Mammary epithelial cell (primary cell): ENCODE measurements at regions of chr11 and their contacts with region 1.

Region 1: GRCh38 chr11:78416305-78417178 is 1.1 kb downstream of the GAB2 start:
- DNase-seq: peak; percentile 61
- H3K4me3 ChIP-seq: peak overlapping the region; percentile 55 to 64 (median 62)
- H3K27ac ChIP-seq: no peak overlapping the region
- H3K4me1 ChIP-seq: peaks cover 9% of the 10 kb centered on the region
- H3K27me3 ChIP-seq: no peaks in the 10 kb centered on the region
- CTCF ChIP-seq: peak in 1 of 2 donors; percentile 41

Region 2: GRCh38 chr11:78188286-78189173 is 228.0 kb before region 1 on chr11 and contains the starts of genes KCTD21 and USP35:
- CTCF ChIA-PET with region 1: no interaction called
- dilution Hi-C with region 1: no loop called
- in situ Hi-C with region 1: no loop called
- intact Hi-C with region 1: no loop called
- DNase-seq: peak; percentile 96
- H3K4me3 ChIP-seq: peak within 1 kb of the TSS; percentile 53 to 99 (median 71)
- H3K27ac ChIP-seq: peak within 1 kb of the TSS; percentile 52
- H3K4me1 ChIP-seq: peaks cover 41% of the 10 kb centered on the region
- H3K27me3 ChIP-seq: no peaks in the 10 kb centered on the region
- CTCF ChIP-seq: no peak
- total RNA-seq, gene KCTD21: 8.7 to 9.7 TPM
- total RNA-seq, gene USP35: 10.7 to 13.3 TPM

Region 3: GRCh38 chr11:78228467-78228866 is 188.1 kb before region 1 on chr11:
- CTCF ChIA-PET with region 1: no interaction called
- dilution Hi-C with region 1: no loop called
- in situ Hi-C with region 1: no loop called
- intact Hi-C with region 1: loop called (anchors 1 kb)
- DNase-seq: peak; percentile 39
- H3K4me3 ChIP-seq: no peak overlapping the region
- H3K27ac ChIP-seq: no peak overlapping the region
- H3K4me1 ChIP-seq: peaks cover 4% of the 10 kb centered on the region
- H3K27me3 ChIP-seq: no peaks in the 10 kb centered on the region
- CTCF ChIP-seq: peak; percentile 43 to 66

Region 4: GRCh38 chr11:78373689-78374088 is 42.9 kb before region 1 on chr11:
- CTCF ChIA-PET with region 1: interaction called, 17 read pairs
- dilution Hi-C with region 1: no loop called
- in situ Hi-C with region 1: no loop called
- intact Hi-C with region 1: no loop called
- DNase-seq: no peak
- H3K4me3 ChIP-seq: no peak overlapping the region
- H3K27ac ChIP-seq: no peak overlapping the region
- H3K4me1 ChIP-seq: no peaks in the 10 kb centered on the region
- H3K27me3 ChIP-seq: peaks cover 1% of the 10 kb centered on the region
- CTCF ChIP-seq: no peak

Region 5: GRCh38 chr11:78525709-78526108 is 109.2 kb after region 1 on chr11:
- CTCF ChIA-PET with region 1: no interaction called
- dilution Hi-C with region 1: no loop called
- in situ Hi-C with region 1: no loop called
- intact Hi-C with region 1: no loop called
- DNase-seq: no peak
- H3K4me3 ChIP-seq: no peak overlapping the region
- H3K27ac ChIP-seq: no peak overlapping the region
- H3K4me1 ChIP-seq: no peaks in the 10 kb centered on the region
- H3K27me3 ChIP-seq: no peaks in the 10 kb centered on the region
- CTCF ChIP-seq: no peak

Region 6: GRCh38 chr11:78564490-78565467 is 148.2 kb after region 1 on chr11:
- CTCF ChIA-PET with region 1: no interaction called
- dilution Hi-C with region 1: no loop called
- in situ Hi-C with region 1: loop called (anchors 10 kb)
- intact Hi-C with region 1: loop called (anchors 1 kb)
- DNase-seq: peak; percentile 42
- H3K4me3 ChIP-seq: no peak overlapping the region
- H3K27ac ChIP-seq: no peak overlapping the region
- H3K4me1 ChIP-seq: peaks cover 31% of the 10 kb centered on the region
- H3K27me3 ChIP-seq: no peaks in the 10 kb centered on the region
- CTCF ChIP-seq: peak; percentile 60 to 61